Breast epithelium (tissue), 4 donors: ENCODE measurements at regions of chr11 and their contacts with region 1.

Region 1: GRCh38 chr11:117946842-117947526 is 17.8 kb upstream of the TMPRSS13 start:
- DNase-seq: peak; percentile 79 to 87
- H3K4me3 ChIP-seq: no peak overlapping the region
- H3K27ac ChIP-seq: no peak overlapping the region
- H3K4me1 ChIP-seq: no peaks in the 10 kb centered on the region
- H3K27me3 ChIP-seq: no peaks in the 10 kb centered on the region
- CTCF ChIP-seq: peak; percentile 90 to 98 (median 96)
- POLR2A ChIP-seq: no peak

Region 2: DNA sequence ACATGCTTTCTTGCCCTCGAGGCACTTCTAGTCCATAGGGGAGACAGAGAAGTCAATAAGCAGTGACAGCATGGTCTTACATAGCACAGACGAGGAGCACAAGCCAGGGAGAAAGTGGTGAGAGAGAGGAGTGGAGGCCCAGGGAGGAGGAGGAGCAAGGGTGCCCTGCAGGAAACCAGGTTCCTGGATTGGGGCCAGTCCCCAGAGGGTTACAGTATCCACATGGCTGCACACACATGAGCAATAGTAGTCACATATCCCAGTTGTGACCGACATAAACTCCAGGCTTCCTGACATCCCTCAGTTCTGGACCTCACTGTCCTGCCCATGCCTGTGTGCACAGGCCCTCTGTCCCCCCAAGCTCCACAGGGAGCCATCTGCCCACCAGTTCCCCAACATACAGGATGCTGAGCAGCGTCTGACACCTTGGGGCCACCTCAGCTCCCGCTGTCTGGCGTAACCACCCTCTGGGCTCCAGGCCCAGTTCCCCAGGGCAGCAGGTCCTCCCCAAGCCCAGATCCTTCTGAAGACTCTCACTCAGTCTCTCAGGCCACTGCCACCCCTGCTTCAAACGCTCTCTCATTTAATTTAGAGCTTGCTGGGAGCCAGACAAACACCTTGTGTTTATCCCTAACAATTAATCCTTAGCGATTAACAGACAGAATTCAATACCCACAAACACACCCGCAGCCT is 203.7 kb before region 1 on chr11:
- intact Hi-C with region 1: no loop called
- DNase-seq: no peak
- H3K4me3 ChIP-seq: no peak overlapping the region
- H3K27ac ChIP-seq: no peak overlapping the region
- H3K4me1 ChIP-seq: no peaks in the 10 kb centered on the region
- H3K27me3 ChIP-seq: no peaks in the 10 kb centered on the region
- CTCF ChIP-seq: no peak
- POLR2A ChIP-seq: no peak

Region 3: GRCh38 chr11:117843666-117844484 is 103.1 kb before region 1 on chr11:
- intact Hi-C with region 1: loop called (anchors 5 kb)
- DNase-seq: peak; percentile 67 to 84
- H3K4me3 ChIP-seq: no peak overlapping the region
- H3K27ac ChIP-seq: no peak overlapping the region
- H3K4me1 ChIP-seq: no peaks in the 10 kb centered on the region
- H3K27me3 ChIP-seq: no peaks in the 10 kb centered on the region
- CTCF ChIP-seq: peak; percentile 97 to 98 (median 98)
- POLR2A ChIP-seq: no peak